ENCODE measurements at regions of chr5 and their contacts with region 1.

Region 1: GRCh38 chr5:138824924-138825863 is 49.9 kb downstream of the LRRTM2 start:
- DNase-seq: no peak
- H3K4me3 ChIP-seq: no peak overlapping the region
- H3K27ac ChIP-seq: no peak overlapping the region
- H3K4me1 ChIP-seq: peaks cover 0 to under 1% (median 0%) of the 10 kb centered on the region in 4 experiments; a peak in 2 of 7 replicates
- H3K27me3 ChIP-seq: no peaks in the 10 kb centered on the region
- CTCF ChIP-seq: peak in 1 of 3 experiments; percentile 46; a peak in 2 of 4 replicates
- EP300 ChIP-seq: no peak
- POLR2A ChIP-seq: no peak
- RAD21 ChIP-seq: peak; percentile 20 to 38; a peak in 2 of 4 replicates

Region 2: DNA sequence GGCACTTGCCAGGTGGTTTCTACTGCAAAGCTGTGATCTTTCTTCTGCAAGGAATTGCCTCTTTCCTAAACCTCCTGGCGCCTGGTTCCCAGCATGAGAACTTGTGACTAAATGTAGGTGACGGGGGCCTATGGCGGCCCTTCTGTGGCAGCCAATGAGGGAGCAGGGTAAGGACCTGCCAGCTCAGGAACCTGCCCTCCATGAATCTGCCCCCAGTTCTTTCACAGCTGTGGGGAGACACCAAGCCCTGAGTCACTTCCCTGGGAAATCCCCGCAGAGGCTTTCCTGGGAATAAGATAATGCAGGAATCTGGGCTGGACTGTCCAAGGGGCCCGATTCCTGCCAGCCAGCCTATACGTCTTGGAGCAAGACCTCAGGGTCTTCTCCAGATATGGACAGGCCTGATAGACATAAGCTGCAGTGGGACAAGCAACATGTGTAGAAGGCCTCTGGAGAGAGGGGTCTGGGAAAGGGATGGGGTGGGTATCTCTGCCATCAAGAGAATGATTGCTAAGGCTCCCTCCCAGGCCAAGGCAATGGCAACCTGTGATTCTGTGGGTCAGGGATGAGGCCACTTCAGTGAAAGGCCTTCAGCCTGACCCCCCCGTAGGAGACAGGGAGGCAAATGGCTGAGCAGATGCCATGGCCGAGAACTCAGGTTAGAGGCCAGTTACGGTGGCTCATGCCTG is 128.5 kb before region 1 on chr5:
- CTCF ChIA-PET with region 1: no interaction called
- POLR2A ChIA-PET with region 1: no interaction called
- DNase-seq: no peak
- H3K4me3 ChIP-seq: no peak overlapping the region
- H3K27ac ChIP-seq: no peak overlapping the region
- H3K4me1 ChIP-seq: no peaks in the 10 kb centered on the region
- H3K27me3 ChIP-seq: no peaks in the 10 kb centered on the region
- CTCF ChIP-seq: no peak
- EP300 ChIP-seq: no peak
- POLR2A ChIP-seq: no peak
- RAD21 ChIP-seq: no peak

Region 3: DNA sequence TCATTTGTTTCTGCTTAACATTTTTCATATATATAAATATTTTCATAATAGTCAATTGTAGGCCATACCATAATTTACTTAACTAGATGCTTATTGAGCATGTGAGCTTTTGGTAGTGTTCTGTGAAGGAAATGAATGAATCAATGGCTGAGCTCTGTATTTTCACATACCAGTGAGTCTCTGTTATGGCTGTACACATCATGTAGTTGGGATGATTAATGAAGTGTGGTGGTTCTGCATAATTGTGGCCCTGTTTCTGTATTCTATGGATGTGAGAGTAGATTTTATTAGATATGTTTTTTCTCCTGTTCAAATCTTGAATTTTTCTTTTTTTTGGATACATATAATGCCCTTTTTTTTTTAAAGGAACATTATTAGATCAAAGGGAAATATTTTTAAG is 15.8 kb before region 1 on chr5:
- CTCF ChIA-PET with region 1: interaction called, 52 read pairs
- POLR2A ChIA-PET with region 1: interaction called, 3 read pairs
- DNase-seq: no peak
- H3K4me3 ChIP-seq: no peak overlapping the region
- H3K27ac ChIP-seq: no peak overlapping the region
- H3K4me1 ChIP-seq: no peaks in the 10 kb centered on the region
- H3K27me3 ChIP-seq: no peaks in the 10 kb centered on the region
- CTCF ChIP-seq: no peak
- EP300 ChIP-seq: no peak
- POLR2A ChIP-seq: no peak
- RAD21 ChIP-seq: no peak

Region 4: GRCh38 chr5:138849426-138849825 is 24.2 kb after region 1 on chr5:
- CTCF ChIA-PET with region 1: interaction called, 17 read pairs
- POLR2A ChIA-PET with region 1: no interaction called
- DNase-seq: no peak
- H3K4me3 ChIP-seq: no peak overlapping the region
- H3K27ac ChIP-seq: no peak overlapping the region
- H3K4me1 ChIP-seq: peaks cover 0 to 4% (median 0%) of the 10 kb centered on the region in 4 experiments; a peak in 2 of 7 replicates
- H3K27me3 ChIP-seq: no peaks in the 10 kb centered on the region
- CTCF ChIP-seq: no peak
- EP300 ChIP-seq: no peak
- POLR2A ChIP-seq: no peak
- RAD21 ChIP-seq: no peak

Region 5: GRCh38 chr5:138869763-138870500 is 44.7 kb after region 1 on chr5:
- CTCF ChIA-PET with region 1: interaction called, 13 read pairs
- POLR2A ChIA-PET with region 1: no interaction called
- DNase-seq: no peak
- H3K4me3 ChIP-seq: no peak overlapping the region
- H3K27ac ChIP-seq: no peak overlapping the region
- H3K4me1 ChIP-seq: peaks cover 0 to 20% (median 15%) of the 10 kb centered on the region in 4 experiments; a peak in 5 of 7 replicates
- H3K27me3 ChIP-seq: no peaks in the 10 kb centered on the region
- CTCF ChIP-seq: no peak
- EP300 ChIP-seq: no peak
- POLR2A ChIP-seq: no peak
- RAD21 ChIP-seq: no peak

Region 6: DNA sequence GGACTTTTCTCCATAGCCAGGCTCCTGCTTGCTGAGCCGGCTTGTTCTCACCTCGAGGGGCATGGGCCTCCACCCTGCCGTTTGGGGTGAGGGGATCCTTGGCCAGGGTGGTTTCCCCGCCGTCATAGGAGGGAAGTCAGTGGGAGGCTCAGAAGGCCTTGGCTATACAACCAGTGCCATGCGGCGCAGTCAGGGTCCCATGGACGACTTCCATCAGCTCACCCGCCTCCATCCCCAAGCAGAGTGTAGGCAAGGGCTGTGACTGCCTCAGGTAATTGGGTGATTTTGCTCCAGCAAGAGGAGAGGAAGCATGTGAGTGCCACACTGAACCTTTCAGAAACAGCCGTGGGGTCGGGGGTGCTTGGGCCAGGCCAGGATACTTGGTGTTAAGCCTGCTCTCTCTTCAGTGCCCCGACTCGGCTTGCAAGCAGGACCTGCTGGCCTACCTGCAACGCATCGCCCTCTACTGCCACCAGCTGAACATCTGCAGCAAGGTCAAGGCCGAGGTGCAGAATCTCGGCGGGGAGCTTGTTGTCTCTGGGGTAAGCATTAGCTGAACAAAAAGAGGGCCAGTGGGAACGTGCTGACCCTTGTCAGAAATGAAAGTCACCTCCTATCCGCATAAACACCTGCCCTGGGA is 107.1 kb after region 1 on chr5:
- CTCF ChIA-PET with region 1: interaction called, 13 read pairs
- POLR2A ChIA-PET with region 1: no interaction called
- DNase-seq: no peak
- H3K4me3 ChIP-seq: no peak overlapping the region
- H3K27ac ChIP-seq: no peak overlapping the region
- H3K4me1 ChIP-seq: peaks cover 0 to 14% (median 5%) of the 10 kb centered on the region in 4 experiments; a peak in 5 of 7 replicates
- H3K27me3 ChIP-seq: no peaks in the 10 kb centered on the region
- CTCF ChIP-seq: peak; percentile 77 to 93 (median 86)
- EP300 ChIP-seq: no peak
- POLR2A ChIP-seq: no peak
- RAD21 ChIP-seq: peak; percentile 76 to 86

Measured in H1 (cell line).